Heart left ventricle (tissue), 16 donors: ENCODE measurements at regions of chr1 and their contacts with region 1.

Region 1: GRCh38 chr1:109620841-109621286 is 1.2 kb downstream of the AMPD2 start:
- DNase-seq: peak; percentile 93 to 97 (median 96)
- ATAC-seq: peak; percentile 67 to 87 (median 79)
- H3K4me3 ChIP-seq: peak overlapping the region; percentile 46 to 86 (median 68)
- H3K27ac ChIP-seq: peak overlapping the region; percentile 28 to 96 (median 80)
- H3K4me1 ChIP-seq: peaks cover 0 to 84% (median 34%) of the 10 kb centered on the region in 12 donors
- H3K27me3 ChIP-seq: no peaks in the 10 kb centered on the region
- CTCF ChIP-seq: no peak
- POLR2A ChIP-seq: no peak

Region 2: GRCh38 chr1:109556563-109556962 is 64.3 kb before region 1 on chr1:
- intact Hi-C with region 1: loop called in 1 of 10 experiments (anchors 10 kb)
- DNase-seq: no peak
- ATAC-seq: no peak
- H3K4me3 ChIP-seq: no peak overlapping the region
- H3K27ac ChIP-seq: peak overlapping the region in 1 of 12 donors; percentile 59
- H3K4me1 ChIP-seq: peaks cover 0 to 75% (median 25%) of the 10 kb centered on the region in 12 donors
- H3K27me3 ChIP-seq: no peaks in the 10 kb centered on the region
- CTCF ChIP-seq: no peak
- POLR2A ChIP-seq: no peak

Region 3: DNA sequence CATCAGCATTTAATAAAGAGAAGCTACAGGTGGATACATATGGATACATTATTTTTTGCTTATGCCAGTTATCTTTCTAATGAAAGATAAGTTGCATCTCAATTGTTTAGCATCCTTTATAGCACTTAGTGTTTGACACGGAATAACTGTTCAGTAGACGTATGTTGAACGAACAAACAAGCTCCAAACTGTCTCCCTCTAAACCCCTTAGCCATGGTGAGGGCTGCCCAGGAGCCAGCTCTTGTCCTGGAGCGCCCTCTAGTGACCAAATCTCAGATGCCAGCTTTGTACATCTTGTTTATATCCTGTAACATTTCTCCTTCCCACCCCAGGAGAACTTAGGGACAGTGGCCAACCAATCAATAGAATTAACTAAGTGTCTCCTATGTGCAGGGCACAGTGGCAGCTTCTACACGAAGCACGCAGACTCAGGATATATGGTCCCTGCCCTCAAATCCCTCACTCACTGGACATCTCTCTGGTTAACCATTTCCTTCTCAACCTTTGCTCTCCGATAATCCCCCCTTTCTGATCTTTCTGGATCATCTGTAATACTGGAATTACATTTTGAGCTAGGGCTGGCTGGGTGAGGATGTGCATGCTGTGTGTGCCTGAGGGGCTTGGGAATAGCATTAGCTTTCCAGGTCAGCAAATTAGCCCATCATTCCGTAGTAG is 875.2 kb after region 1 on chr1:
- intact Hi-C with region 1: no loop called
- DNase-seq: peak in 4 of 5 donors; percentile 62 to 77 (median 68)
- ATAC-seq: peak; percentile 60 to 88 (median 81)
- H3K4me3 ChIP-seq: no peak overlapping the region
- H3K27ac ChIP-seq: no peak overlapping the region
- H3K4me1 ChIP-seq: no peaks in the 10 kb centered on the region
- H3K27me3 ChIP-seq: no peaks in the 10 kb centered on the region
- CTCF ChIP-seq: peak; percentile 78 to 94 (median 90)
- POLR2A ChIP-seq: no peak

Region 4: GRCh38 chr1:110850636-110851035 is 1229.8 kb after region 1 on chr1:
- intact Hi-C with region 1: no loop called
- DNase-seq: no peak
- ATAC-seq: no peak
- H3K4me3 ChIP-seq: no peak overlapping the region
- H3K27ac ChIP-seq: no peak overlapping the region
- H3K4me1 ChIP-seq: no peaks in the 10 kb centered on the region
- H3K27me3 ChIP-seq: peaks cover 0 to 19% (median 0%) of the 10 kb centered on the region in 9 donors
- CTCF ChIP-seq: no peak
- POLR2A ChIP-seq: no peak